ENCODE measurements at regions of chr19 and their contacts with region 1.

Region 1: DNA sequence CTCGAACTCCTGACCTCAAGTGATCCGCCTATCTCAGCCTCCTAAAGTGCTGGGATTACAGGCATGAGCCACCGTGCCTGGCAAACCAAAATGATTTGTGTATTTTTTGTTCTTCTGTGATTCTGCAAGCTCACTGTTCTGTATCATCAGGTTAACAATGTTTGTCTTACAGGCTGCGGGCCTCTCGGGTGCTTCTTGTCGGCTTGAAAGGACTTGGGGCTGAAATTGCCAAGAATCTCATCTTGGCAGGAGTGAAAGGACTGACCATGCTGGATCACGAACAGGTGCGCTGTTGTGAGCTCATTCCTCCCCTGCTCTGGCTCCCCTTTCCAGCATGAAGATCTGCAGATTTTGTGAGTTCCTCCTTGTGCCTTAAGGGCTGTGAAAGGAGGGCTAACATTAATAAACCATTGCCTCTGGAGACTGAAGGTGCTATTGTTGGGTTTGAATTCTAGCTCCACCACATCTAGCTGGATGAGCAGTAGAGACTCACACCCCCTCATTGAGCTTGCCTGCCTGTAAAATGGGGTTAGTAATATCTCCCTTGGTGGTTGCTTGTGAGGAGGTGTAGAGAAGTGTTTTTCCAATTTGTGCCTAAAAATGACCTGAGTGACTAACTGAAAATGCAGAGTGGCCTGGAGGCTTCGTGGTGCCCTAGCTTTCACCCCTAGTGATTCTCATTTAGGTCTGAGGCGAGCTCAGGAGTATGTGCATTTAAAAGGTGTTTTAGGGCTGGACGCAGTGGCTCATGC is 12.9 kb downstream of the SAE1 start:
- DNase-seq: no peak
- ATAC-seq: no peak
- H3K4me3 ChIP-seq: no peak overlapping the region
- H3K27ac ChIP-seq: no peak overlapping the region
- H3K4me1 ChIP-seq: peaks cover 0 to 9% (median 0%) of the 10 kb centered on the region in 9 donors
- H3K27me3 ChIP-seq: no peaks in the 10 kb centered on the region
- CTCF ChIP-seq: no peak

Region 2: GRCh38 chr19:47176627-47177090 is 33.2 kb after region 1 on chr19:
- intact Hi-C with region 1: no loop called
- DNase-seq: peak in 1 of 2 donors; percentile 16
- ATAC-seq: peak; percentile 50 to 80 (median 64)
- H3K4me3 ChIP-seq: no peak overlapping the region
- H3K27ac ChIP-seq: peak overlapping the region in 9 of 10 donors; percentile 24 to 65 (median 60)
- H3K4me1 ChIP-seq: peaks cover 13 to 35% (median 23%) of the 10 kb centered on the region in 9 donors
- H3K27me3 ChIP-seq: no peaks in the 10 kb centered on the region
- CTCF ChIP-seq: no peak

Region 3: DNA sequence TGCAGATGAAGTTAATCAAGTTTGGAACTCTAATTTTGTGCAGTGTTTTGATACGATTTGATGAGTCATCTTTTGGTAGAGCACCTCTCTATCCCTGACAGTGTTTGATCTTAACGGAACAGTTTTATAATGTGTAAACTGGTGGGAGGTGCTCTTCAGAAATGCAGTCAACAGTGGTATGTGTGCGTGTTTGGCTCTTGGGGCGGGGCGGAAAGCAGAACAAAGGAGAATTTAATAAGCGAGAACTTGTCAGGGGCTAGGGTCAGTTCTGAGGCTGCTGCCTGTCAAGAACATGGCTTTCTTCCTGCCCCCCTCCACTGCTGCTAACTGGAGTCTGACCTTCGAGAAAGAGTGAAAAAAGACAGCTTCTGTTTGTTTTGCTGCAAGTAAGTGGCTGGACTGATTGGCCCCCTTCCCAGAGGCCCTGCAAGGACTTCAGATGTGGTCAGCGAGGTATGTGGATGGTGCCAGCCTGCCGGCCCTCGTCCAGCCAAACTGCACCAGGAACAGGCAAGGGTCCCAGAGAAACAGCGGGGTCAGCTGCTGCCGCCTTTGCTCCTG is 46.7 kb after region 1 on chr19:
- intact Hi-C with region 1: loop called in 1 of 10 experiments (anchors 10 kb)
- DNase-seq: peak; percentile 32 to 35
- ATAC-seq: peak; percentile 31 to 68 (median 60)
- H3K4me3 ChIP-seq: peak overlapping the region in 3 of 10 donors; percentile 2 to 28 (median 13)
- H3K27ac ChIP-seq: peak overlapping the region; percentile 2 to 82 (median 72)
- H3K4me1 ChIP-seq: peaks cover 7 to 25% (median 21%) of the 10 kb centered on the region in 9 donors
- H3K27me3 ChIP-seq: no peaks in the 10 kb centered on the region
- CTCF ChIP-seq: no peak

Region 4: GRCh38 chr19:47210689-47211316 is 67.3 kb after region 1 on chr19:
- intact Hi-C with region 1: loop called in 4 of 10 experiments (anchors 2 to 5 kb)
- DNase-seq: peak; percentile 35 to 88
- ATAC-seq: peak; percentile 38 to 77 (median 74)
- H3K4me3 ChIP-seq: no peak overlapping the region
- H3K27ac ChIP-seq: peak overlapping the region in 6 of 10 donors; percentile 32 to 73 (median 56)
- H3K4me1 ChIP-seq: peaks cover 4 to 25% (median 13%) of the 10 kb centered on the region in 9 donors
- H3K27me3 ChIP-seq: no peaks in the 10 kb centered on the region
- CTCF ChIP-seq: peak; percentile 71 to 91 (median 85)

Measured in heart right ventricle (tissue), 16 donors.